ENCODE measurements at regions of chr19 and their contacts with region 1.

Region 1: GRCh38 chr19:4400135-4400936 is at the start of gene SH3GL1:
- DNase-seq: peak; percentile 80 to 97 (median 94)
- ATAC-seq: peak; percentile 66
- H3K4me3 ChIP-seq: peak within 1 kb of the TSS; percentile 83 to 92
- H3K4me3 Mint-ChIP-seq: peak within 1 kb of the TSS; percentile 91
- H3K27ac ChIP-seq: peak within 1 kb of the TSS; percentile 77 to 97
- H3K27ac Mint-ChIP-seq: peak within 1 kb of the TSS; percentile 98
- H3K4me1 ChIP-seq: peaks cover 44% of the 10 kb centered on the region
- H3K4me1 Mint-ChIP-seq: peaks cover 55% of the 10 kb centered on the region
- H3K27me3 ChIP-seq: no peaks in the 10 kb centered on the region
- H3K27me3 Mint-ChIP-seq: no peaks in the 10 kb centered on the region
- CTCF ChIP-seq: peak; percentile 71
- total RNA-seq, gene SH3GL1: 35.0 to 38.1 TPM

Region 2: GRCh38 chr19:3626473-3627350 is 773.6 kb before region 1 on chr19 and contains the start of gene CACTIN:
- CTCF ChIA-PET with region 1: no interaction called
- POLR2A ChIA-PET with region 1: no interaction called
- intact Hi-C with region 1: loop called in 1 of 2 experiments (anchors 5 kb)
- DNase-seq: peak; percentile 97 to 99 (median 99)
- ATAC-seq: peak; percentile 99
- H3K4me3 ChIP-seq: peak within 1 kb of the TSS; percentile 77 to 80
- H3K4me3 Mint-ChIP-seq: peak within 1 kb of the TSS; percentile 85
- H3K27ac ChIP-seq: peak within 1 kb of the TSS; percentile 74 to 99
- H3K27ac Mint-ChIP-seq: peak within 1 kb of the TSS; percentile 99
- H3K4me1 ChIP-seq: peaks cover 20% of the 10 kb centered on the region
- H3K4me1 Mint-ChIP-seq: peaks cover 26% of the 10 kb centered on the region
- H3K27me3 ChIP-seq: no peaks in the 10 kb centered on the region
- H3K27me3 Mint-ChIP-seq: no peaks in the 10 kb centered on the region
- CTCF ChIP-seq: no peak
- total RNA-seq, gene CACTIN: 32.5 to 33.0 TPM

Region 3: DNA sequence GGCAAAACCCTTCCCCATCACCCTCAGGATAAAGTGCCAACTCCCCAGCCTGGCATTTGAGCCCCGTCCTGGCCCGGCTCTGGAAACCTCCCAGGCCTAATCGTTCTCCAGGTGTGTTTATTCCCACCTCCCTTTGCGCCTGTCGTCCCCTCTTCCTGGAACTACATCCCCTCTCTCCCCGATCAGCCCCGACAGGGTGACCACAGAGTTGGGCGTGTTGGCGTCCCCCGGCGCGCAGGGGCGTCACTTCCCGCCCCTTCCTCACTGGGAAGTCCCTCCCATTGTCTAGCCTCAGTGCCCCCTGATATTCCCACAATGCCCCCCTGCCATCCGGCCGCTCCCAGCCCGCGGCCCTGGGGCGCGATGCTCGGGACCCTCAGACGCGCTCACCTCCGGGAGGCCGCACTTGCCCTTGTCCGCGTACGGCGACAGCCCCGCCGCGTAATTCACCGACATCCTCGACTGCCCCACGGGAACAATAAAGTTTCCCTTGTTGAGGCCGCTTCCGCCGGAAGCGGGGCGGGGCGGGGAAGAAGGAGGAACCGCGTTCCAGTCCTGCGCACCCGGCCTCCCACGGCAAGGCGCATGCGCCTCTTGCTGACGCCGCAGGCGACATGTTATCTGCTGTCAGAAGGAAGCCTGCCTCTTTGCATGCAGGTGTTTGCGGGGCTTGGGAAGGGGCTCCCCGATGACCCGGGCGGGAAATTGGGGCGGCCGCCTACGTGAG is 218.1 kb before region 1 on chr19 and contains the starts of genes ANKRD24 and SIRT6:
- CTCF ChIA-PET with region 1: no interaction called
- POLR2A ChIA-PET with region 1: no interaction called
- intact Hi-C with region 1: loop called in 1 of 2 experiments (anchors 1 kb)
- DNase-seq: peak; percentile 91 to 98 (median 97)
- ATAC-seq: peak; percentile 88
- H3K4me3 ChIP-seq: peak within 1 kb of the TSS; percentile 79 to 95
- H3K4me3 Mint-ChIP-seq: peak within 1 kb of the TSS; percentile 98
- H3K27ac ChIP-seq: peak within 1 kb of the TSS; percentile 74 to 76
- H3K27ac Mint-ChIP-seq: peak within 1 kb of the TSS; percentile 93
- H3K4me1 ChIP-seq: peaks cover 28% of the 10 kb centered on the region
- H3K4me1 Mint-ChIP-seq: peaks cover 31% of the 10 kb centered on the region
- H3K27me3 ChIP-seq: no peaks in the 10 kb centered on the region
- H3K27me3 Mint-ChIP-seq: peaks cover 2% of the 10 kb centered on the region
- CTCF ChIP-seq: no peak
- total RNA-seq, gene ANKRD24: 0.83 to 1.2 TPM
- total RNA-seq, gene SIRT6: 12.0 to 13.0 TPM

Region 4: DNA sequence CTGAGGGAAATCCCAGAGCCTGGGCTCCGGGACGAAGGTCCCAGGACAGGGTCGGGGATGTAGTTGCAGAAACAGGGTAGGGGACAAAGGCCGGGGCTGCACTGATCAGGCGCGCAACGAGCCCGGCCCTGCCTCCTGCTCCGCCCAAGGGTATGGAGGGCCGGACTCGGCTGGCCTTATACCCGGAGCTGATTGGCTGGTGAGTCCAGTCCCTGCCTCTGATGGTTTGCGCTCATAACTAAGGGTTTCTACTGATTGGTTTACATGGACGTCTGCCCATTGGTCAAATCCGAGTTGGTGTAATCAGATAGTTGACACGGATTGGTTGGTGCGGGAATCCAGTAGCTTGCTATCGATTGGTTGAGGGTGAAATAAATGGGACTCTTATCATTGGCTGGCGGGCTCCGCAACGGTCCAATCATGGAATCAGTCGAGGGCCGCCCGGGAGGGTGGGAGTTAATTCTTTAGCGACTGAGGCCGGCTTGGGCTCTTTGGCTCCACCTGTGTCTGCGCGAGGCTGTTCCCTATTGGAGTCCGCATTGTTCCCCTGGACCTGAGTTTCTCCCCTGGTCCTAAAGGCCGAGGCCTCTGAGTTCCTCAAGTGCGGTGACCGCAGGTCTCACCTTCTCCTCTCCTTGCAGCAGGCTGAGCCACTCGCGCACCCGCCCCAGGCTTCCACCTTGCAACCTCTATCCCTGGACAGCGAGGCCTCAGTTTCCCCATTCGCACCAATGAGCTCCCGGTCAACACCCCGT is 57.5 kb before region 1 on chr19:
- CTCF ChIA-PET with region 1: interaction called, 5 read pairs
- POLR2A ChIA-PET with region 1: interaction called, 3 read pairs
- intact Hi-C with region 1: loop called (anchors 1 kb)
- DNase-seq: peak; percentile 80 to 99 (median 87)
- ATAC-seq: peak; percentile 78
- H3K4me3 ChIP-seq: peak overlapping the region; percentile 72 to 100
- H3K4me3 Mint-ChIP-seq: peak overlapping the region; percentile 92
- H3K27ac ChIP-seq: peak overlapping the region; percentile 81 to 83
- H3K27ac Mint-ChIP-seq: peak overlapping the region; percentile 91
- H3K4me1 ChIP-seq: peaks cover 20% of the 10 kb centered on the region
- H3K4me1 Mint-ChIP-seq: peaks cover 36% of the 10 kb centered on the region
- H3K27me3 ChIP-seq: no peaks in the 10 kb centered on the region
- H3K27me3 Mint-ChIP-seq: no peaks in the 10 kb centered on the region
- CTCF ChIP-seq: no peak

Region 5: GRCh38 chr19:4457654-4458395 is 57.5 kb after region 1 on chr19 and contains the start of gene UBXN6:
- CTCF ChIA-PET with region 1: interaction called, 3 read pairs
- POLR2A ChIA-PET with region 1: no interaction called
- intact Hi-C with region 1: loop called (anchors 1 kb)
- DNase-seq: peak; percentile 95 to 99 (median 97)
- ATAC-seq: peak; percentile 96
- H3K4me3 ChIP-seq: peak within 1 kb of the TSS; percentile 47 to 70
- H3K4me3 Mint-ChIP-seq: peak within 1 kb of the TSS; percentile 89
- H3K27ac ChIP-seq: peak within 1 kb of the TSS; percentile 63 to 73
- H3K27ac Mint-ChIP-seq: peak within 1 kb of the TSS; percentile 92
- H3K4me1 ChIP-seq: peaks cover 12% of the 10 kb centered on the region
- H3K4me1 Mint-ChIP-seq: peaks cover 18% of the 10 kb centered on the region
- H3K27me3 ChIP-seq: no peaks in the 10 kb centered on the region
- H3K27me3 Mint-ChIP-seq: no peaks in the 10 kb centered on the region
- CTCF ChIP-seq: no peak
- total RNA-seq, gene UBXN6: 61.5 to 62.6 TPM

Region 6: GRCh38 chr19:4534836-4535658 is 134.7 kb after region 1 on chr19 and contains the start of gene PLIN5:
- CTCF ChIA-PET with region 1: no interaction called
- POLR2A ChIA-PET with region 1: no interaction called
- intact Hi-C with region 1: no loop called
- DNase-seq: peak; percentile 15 to 63 (median 50)
- ATAC-seq: peak; percentile 78
- H3K4me3 ChIP-seq: peak within 1 kb of the TSS in 1 of 2 experiments; percentile 3
- H3K4me3 Mint-ChIP-seq: peak within 1 kb of the TSS; percentile 43
- H3K27ac ChIP-seq: no peak within 1 kb of the TSS
- H3K27ac Mint-ChIP-seq: no peak within 1 kb of the TSS
- H3K4me1 ChIP-seq: peaks cover 11% of the 10 kb centered on the region
- H3K4me1 Mint-ChIP-seq: peaks cover 7% of the 10 kb centered on the region
- H3K27me3 ChIP-seq: no peaks in the 10 kb centered on the region
- H3K27me3 Mint-ChIP-seq: peaks cover 11% of the 10 kb centered on the region
- CTCF ChIP-seq: no peak
- total RNA-seq, gene PLIN5: 0.53 to 0.54 TPM

Region 7: GRCh38 chr19:5680437-5681368 is 1280.4 kb after region 1 on chr19 and contains the starts of genes HSD11B1L and MICOS13:
- CTCF ChIA-PET with region 1: no interaction called
- POLR2A ChIA-PET with region 1: no interaction called
- intact Hi-C with region 1: loop called in 1 of 2 experiments (anchors 5 kb)
- DNase-seq: peak; percentile 95 to 100 (median 98)
- ATAC-seq: peak; percentile 94
- H3K4me3 ChIP-seq: peak within 1 kb of the TSS; percentile 94 to 96
- H3K4me3 Mint-ChIP-seq: peak within 1 kb of the TSS; percentile 90
- H3K27ac ChIP-seq: peak within 1 kb of the TSS; percentile 98 to 100
- H3K27ac Mint-ChIP-seq: peak within 1 kb of the TSS; percentile 96
- H3K4me1 ChIP-seq: peaks cover 15% of the 10 kb centered on the region
- H3K4me1 Mint-ChIP-seq: peaks cover 25% of the 10 kb centered on the region
- H3K27me3 ChIP-seq: no peaks in the 10 kb centered on the region
- H3K27me3 Mint-ChIP-seq: no peaks in the 10 kb centered on the region
- CTCF ChIP-seq: no peak
- total RNA-seq, gene HSD11B1L: 3.1 to 4.1 TPM
- total RNA-seq, gene MICOS13: 19.6 to 24.8 TPM